H1 (cell line): ENCODE measurements at regions of chr9 and their contacts with region 1.

Region 1: DNA sequence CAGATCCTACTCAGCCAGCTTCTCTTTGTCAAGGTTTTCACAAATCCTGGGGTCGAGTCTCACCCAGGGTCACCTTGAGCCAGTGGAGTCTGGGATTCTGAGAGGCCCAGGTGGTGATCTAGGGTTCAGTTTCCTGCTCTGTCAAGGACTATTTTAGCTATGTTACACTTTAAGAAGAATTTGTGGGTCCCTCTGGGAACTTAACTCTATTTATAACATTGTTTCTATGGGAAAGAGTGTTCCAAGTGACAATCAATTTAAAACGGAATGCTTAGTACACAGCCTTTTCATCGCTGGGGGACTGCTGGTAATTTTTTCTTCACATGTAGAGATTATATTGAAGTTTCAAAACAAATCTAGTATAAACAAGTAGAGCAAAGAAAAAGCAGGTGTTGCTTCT is 26.9 kb upstream of the TMEM252 start:
- DNase-seq: no peak
- H3K4me3 ChIP-seq: no peak overlapping the region
- H3K27ac ChIP-seq: no peak overlapping the region
- H3K4me1 ChIP-seq: peaks cover 0 to 5% (median 1%) of the 10 kb centered on the region in 4 experiments; a peak in 4 of 7 replicates
- H3K27me3 ChIP-seq: peaks cover 0 to 3% (median 0%) of the 10 kb centered on the region in 4 experiments; a peak in 2 of 7 replicates
- CTCF ChIP-seq: no peak
- EP300 ChIP-seq: no peak
- POLR2A ChIP-seq: no peak
- RAD21 ChIP-seq: no peak

Region 2: GRCh38 chr9:68507130-68507805 is 60.3 kb before region 1 on chr9:
- CTCF ChIA-PET with region 1: interaction called, 18 read pairs
- POLR2A ChIA-PET with region 1: no interaction called
- DNase-seq: no peak
- H3K4me3 ChIP-seq: no peak overlapping the region
- H3K27ac ChIP-seq: no peak overlapping the region
- H3K4me1 ChIP-seq: no peaks in the 10 kb centered on the region
- H3K27me3 ChIP-seq: peaks cover 44 to 89% (median 77%) of the 10 kb centered on the region in 4 experiments
- CTCF ChIP-seq: peak in 2 of 3 experiments; percentile 15 to 37; a peak in 2 of 4 replicates
- EP300 ChIP-seq: no peak
- POLR2A ChIP-seq: no peak
- RAD21 ChIP-seq: peak; percentile 59 to 60

Region 3: DNA sequence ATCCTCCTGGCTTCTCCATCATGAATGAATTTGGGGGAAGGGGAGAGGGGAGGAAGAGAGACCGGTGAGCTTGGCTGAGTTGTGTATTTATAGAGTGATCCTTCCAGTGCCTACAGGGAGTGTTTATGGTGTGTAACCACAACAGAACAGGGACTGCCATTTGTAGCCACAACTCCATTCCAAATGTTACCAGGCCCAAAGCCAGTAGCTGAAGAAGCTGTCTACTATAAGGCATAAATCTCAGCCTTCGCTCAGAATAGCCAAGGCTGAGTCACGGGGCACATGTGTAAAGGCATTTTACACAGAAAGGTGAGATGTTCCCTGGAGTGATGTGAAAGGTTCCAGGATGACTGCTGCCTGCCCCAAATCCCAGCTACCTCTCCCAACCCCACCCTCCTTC is 29.4 kb before region 1 on chr9:
- CTCF ChIA-PET with region 1: interaction called, 22 read pairs
- POLR2A ChIA-PET with region 1: no interaction called
- DNase-seq: no peak
- H3K4me3 ChIP-seq: no peak overlapping the region
- H3K27ac ChIP-seq: no peak overlapping the region
- H3K4me1 ChIP-seq: no peaks in the 10 kb centered on the region
- H3K27me3 ChIP-seq: peaks cover 0 to 3% (median 2%) of the 10 kb centered on the region in 4 experiments; a peak in 3 of 7 replicates
- CTCF ChIP-seq: no peak
- EP300 ChIP-seq: no peak
- POLR2A ChIP-seq: no peak
- RAD21 ChIP-seq: no peak

Region 4: GRCh38 chr9:68577774-68578591 is 10.4 kb after region 1 on chr9:
- CTCF ChIA-PET with region 1: interaction called, 21 read pairs
- POLR2A ChIA-PET with region 1: no interaction called
- DNase-seq: no peak
- H3K4me3 ChIP-seq: no peak overlapping the region
- H3K27ac ChIP-seq: no peak overlapping the region
- H3K4me1 ChIP-seq: no peaks in the 10 kb centered on the region
- H3K27me3 ChIP-seq: no peaks in the 10 kb centered on the region
- CTCF ChIP-seq: no peak
- EP300 ChIP-seq: no peak
- POLR2A ChIP-seq: no peak
- RAD21 ChIP-seq: no peak

Region 5: GRCh38 chr9:68933434-68934328 is 366.1 kb after region 1 on chr9:
- CTCF ChIA-PET with region 1: no interaction called
- POLR2A ChIA-PET with region 1: no interaction called
- DNase-seq: no peak
- H3K4me3 ChIP-seq: no peak overlapping the region
- H3K27ac ChIP-seq: no peak overlapping the region
- H3K4me1 ChIP-seq: no peaks in the 10 kb centered on the region
- H3K27me3 ChIP-seq: no peaks in the 10 kb centered on the region
- CTCF ChIP-seq: no peak
- EP300 ChIP-seq: no peak
- POLR2A ChIP-seq: no peak
- RAD21 ChIP-seq: no peak